ENCODE measurements at regions of chr7 and their contacts with region 1.

Region 1: GRCh38 chr7:72307566-72307965 is 104.6 kb downstream of the CALN1 start:
- DNase-seq: no peak

Region 2: DNA sequence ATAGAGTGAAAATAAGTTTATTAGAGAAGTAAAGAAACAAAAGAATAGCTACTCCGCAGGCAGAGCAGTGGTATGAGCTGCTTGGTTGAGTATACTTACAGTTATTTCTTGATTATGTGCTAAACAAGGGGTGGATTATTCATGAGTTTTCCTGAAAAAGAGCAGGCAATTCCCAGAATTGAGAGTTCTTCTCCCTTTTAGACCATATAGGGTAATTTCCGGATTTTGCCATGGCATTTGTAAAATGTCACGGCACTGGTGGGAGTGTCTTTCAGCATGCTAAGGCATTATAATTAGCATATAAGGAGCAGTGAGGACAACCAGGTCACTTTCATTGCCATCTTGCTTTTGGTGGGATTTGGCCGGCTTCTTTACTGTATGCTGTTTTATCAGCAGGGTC is 1201.3 kb before region 1 on chr7:
- intact Hi-C with region 1: loop called in 1 of 2 experiments (anchors 5 kb)
- DNase-seq: no peak

Region 3: GRCh38 chr7:72336632-72337389 is 29.2 kb after region 1 on chr7:
- intact Hi-C with region 1: loop called in 1 of 2 experiments (anchors 2 kb)
- DNase-seq: no peak